ENCODE measurements at regions of chr17 and their contacts with region 1.

Region 1: GRCh38 chr17:36948717-36949460 is at the start of gene AATF:
- H3K4me3 Mint-ChIP-seq: peak within 1 kb of the TSS; percentile 95
- H3K27ac Mint-ChIP-seq: peak within 1 kb of the TSS; percentile 91
- H3K4me1 Mint-ChIP-seq: peaks cover 46% of the 10 kb centered on the region
- H3K27me3 Mint-ChIP-seq: peaks cover 38% of the 10 kb centered on the region

Region 2: DNA sequence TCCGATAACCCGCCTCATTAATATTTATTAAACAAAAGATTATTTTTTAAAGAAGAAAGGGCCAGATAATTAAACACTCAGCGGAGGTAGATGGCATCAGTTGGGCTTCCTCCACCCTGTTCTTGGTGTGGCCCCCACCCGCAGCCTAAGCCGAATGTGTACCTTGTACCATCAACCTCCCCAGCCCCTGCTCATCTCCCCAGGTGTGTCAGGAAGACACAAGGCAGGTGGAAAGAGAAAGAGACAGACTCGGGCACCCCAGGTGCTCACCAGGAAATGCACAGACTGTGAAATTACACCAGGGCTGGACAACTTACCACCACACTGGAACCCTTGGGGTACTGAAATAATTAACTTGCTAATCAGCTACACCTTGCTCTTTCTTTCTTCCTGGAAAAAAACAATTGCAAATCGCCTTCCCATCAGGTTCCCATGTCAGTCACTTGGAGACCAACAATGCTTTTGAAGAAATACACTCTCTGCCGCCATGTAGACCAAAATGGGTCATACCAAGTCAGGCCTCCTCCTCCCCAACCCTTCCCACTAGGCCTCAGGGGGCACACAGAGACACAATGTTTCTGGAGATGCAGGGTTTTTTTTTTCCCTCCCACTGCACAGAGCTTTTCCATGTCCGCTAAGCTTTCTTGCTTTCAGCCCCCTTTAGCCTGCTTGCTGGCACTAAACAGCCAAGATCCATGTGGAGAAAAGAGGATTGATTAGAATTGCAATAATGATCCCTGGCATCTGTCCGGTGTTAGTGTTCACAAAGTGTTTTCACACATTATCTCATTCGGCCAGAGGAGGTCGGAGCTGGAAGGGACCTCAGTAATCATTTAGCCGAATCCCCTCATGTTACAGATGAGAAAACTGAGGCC is 20.2 kb before region 1 on chr17:
- intact Hi-C with region 1: loop called (anchors 2 kb)
- H3K4me3 Mint-ChIP-seq: peak overlapping the region; percentile 61
- H3K27ac Mint-ChIP-seq: peak overlapping the region; percentile 73
- H3K4me1 Mint-ChIP-seq: peaks cover 42% of the 10 kb centered on the region
- H3K27me3 Mint-ChIP-seq: peaks cover 66% of the 10 kb centered on the region

Measured in dendritic cell treated with granulocyte-macrophage colony-stimulating factor and Interleukin-4, amounts not matched to agents 40 ng/mL and 50 ng/mL, for 4 days (primary cell).